Activated CD4-positive, alpha-beta T cell treated with anti-CD3 and anti-CD28 coated beads, Interleukin-2, amount 10 ng/mL, durations not matched to agents 7 days and 5 days (primary cell): ENCODE measurements at regions of chr3 and their contacts with region 1.

Region 1: DNA sequence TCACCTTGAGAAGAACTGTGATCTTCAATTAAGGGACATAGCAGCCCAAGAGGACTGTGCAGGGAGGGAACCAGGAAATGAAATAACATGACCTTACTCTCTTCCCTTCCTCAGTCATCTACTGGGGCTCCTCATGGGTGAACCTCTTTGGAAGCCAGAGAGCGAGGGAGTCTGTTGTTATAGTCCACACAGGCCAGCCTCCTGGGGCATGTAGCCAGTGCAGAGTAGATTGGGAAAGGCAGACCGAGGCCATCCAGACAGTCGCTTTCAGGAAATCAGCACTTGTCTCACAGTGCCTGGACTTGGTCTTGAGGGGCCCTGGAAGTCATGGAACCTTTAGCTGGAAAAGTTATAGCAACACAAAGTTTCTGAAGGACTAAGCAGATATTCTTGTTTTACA is 6.1 kb downstream of the CRTAP start:
- DNase-seq: no peak
- H3K4me3 Mint-ChIP-seq: no peak overlapping the region
- H3K27ac Mint-ChIP-seq: no peak overlapping the region
- H3K4me1 Mint-ChIP-seq: peaks cover 8% of the 10 kb centered on the region
- H3K27me3 Mint-ChIP-seq: no peaks in the 10 kb centered on the region

Region 2: DNA sequence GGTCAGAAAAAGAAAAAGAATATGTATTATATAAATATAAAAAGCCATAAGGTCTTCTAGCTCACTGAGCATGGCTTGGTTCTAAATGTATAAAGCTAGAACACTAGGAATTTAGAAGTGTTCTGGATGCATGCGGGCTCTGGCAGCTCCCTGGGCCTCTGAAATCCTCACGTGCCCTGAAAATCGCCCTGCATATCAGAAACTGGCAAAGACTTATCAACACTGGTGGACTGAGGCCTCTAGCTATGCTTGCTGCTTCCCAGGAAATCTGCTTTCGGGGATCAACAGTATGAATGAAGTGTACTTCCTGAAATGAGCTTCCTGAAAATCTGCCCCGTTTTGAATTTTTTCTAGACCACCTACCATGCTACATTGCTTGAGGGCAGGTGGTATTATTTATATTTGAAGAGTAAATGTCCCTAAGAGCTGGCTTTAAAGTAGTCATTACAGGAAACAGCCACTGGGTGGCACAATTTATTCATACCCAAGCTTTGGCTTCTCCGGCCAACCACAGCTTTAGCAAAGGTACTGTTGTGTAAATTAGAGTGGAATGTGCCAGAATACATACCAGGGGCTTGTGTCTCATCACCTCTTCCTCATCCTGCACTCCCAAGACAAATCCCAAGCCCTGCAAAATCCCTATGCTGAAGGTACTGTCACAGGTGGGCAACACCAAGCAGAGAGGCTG is 11.6 kb after region 1 on chr3:
- CTCF ChIA-PET with region 1: interaction called, 14 read pairs
- POLR2A ChIA-PET with region 1: interaction called, 6 read pairs
- DNase-seq: peak; percentile 58
- H3K4me3 Mint-ChIP-seq: no peak overlapping the region
- H3K27ac Mint-ChIP-seq: no peak overlapping the region
- H3K4me1 Mint-ChIP-seq: peaks cover 18% of the 10 kb centered on the region
- H3K27me3 Mint-ChIP-seq: no peaks in the 10 kb centered on the region